IMR-90 (cell line): ENCODE measurements at regions of chr6 and their contacts with region 1.

Region 1: DNA sequence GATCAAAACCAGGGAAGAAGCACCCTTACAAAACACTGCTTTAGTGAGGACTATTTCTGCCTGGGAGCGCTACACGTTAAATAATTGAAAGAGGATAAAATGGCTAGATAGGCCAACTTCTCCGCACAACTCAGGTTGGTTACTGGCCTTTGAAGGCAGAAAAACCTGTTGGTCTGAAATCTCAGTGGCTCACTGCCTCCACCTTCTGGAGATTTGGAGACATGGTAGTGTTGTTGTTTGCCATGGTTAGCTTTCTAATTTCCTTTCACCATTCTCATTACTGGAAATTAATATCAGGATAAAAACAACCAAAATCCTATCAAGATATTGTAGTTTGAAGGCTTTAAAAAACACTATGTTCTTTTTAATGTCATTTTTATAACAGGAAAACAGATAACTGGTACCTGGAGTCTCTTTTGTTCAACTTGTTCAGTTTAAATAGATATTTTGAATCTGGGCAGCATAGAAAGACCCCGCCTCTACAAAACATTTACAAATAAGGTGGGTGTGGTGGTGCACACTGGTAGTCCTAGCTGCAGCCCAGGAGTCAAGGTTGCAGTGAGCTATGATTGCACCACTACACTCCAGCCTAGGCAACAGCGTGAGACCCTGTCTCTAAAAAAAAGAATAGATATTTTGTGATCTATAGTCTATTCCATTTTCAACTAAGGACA is 27.5 kb upstream of the BCLAF1 start:
- DNase-seq: peak; percentile 69
- ATAC-seq: peak; percentile 96
- H3K4me3 ChIP-seq: no peak overlapping the region
- H3K27ac ChIP-seq: no peak overlapping the region
- H3K4me1 ChIP-seq: no peaks in the 10 kb centered on the region
- H3K27me3 ChIP-seq: peaks cover 7% of the 10 kb centered on the region
- CTCF ChIP-seq: peak; percentile 81
- POLR2A ChIP-seq: no peak
- RAD21 ChIP-seq: peak; percentile 82

Region 2: DNA sequence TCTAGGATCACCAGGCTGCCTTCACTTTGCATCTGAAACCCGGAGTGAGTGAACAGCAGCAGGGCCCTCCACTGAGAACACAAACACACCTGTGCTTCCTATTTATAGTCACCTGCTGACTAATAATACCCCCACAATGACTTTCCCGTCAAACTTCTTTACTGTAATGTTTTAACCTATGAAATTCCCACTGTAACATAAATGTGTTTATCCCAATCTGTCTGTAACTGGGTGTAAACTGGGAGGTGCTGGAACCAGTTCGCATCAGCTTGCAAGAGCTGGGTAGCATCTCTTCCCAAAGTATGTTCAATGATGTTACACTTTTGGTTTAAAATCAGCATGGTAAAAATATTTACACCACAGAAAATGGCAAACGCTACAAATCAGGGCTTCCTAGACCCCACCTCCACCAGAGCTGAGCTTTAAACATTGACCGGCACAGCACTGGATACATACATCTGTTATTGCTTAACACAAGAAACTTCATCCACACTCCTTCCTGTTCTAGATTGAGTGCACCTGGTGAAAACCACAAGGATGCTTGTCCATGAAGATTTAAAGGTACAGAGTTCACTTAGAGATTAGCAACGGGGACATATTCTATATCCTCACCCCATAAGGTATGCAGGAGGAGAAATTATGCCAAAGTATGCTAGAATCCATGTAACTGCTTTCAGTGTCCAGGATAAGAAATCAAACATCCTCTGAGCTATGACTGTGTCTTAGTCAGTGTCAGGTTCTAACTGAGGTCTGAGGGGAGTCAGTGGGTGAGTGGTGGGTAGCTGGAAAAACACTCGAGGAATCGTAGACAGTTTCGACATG is 1446.3 kb before region 1 on chr6:
- CTCF ChIA-PET with region 1: no interaction called
- POLR2A ChIA-PET with region 1: no interaction called
- dilution Hi-C with region 1: no loop called
- in situ Hi-C with region 1: no loop called
- intact Hi-C with region 1: no loop called
- DNase-seq: peak; percentile 77
- ATAC-seq: peak; percentile 54; the same call in 1 of the 2 replicates
- H3K4me3 ChIP-seq: no peak overlapping the region
- H3K27ac ChIP-seq: peak overlapping the region; percentile 43; the same call in 1 of the 2 replicates
- H3K4me1 ChIP-seq: no peaks in the 10 kb centered on the region
- H3K27me3 ChIP-seq: no peaks in the 10 kb centered on the region; the same call in 1 of the 2 replicates
- CTCF ChIP-seq: no peak
- POLR2A ChIP-seq: no peak
- RAD21 ChIP-seq: no peak

Region 3: DNA sequence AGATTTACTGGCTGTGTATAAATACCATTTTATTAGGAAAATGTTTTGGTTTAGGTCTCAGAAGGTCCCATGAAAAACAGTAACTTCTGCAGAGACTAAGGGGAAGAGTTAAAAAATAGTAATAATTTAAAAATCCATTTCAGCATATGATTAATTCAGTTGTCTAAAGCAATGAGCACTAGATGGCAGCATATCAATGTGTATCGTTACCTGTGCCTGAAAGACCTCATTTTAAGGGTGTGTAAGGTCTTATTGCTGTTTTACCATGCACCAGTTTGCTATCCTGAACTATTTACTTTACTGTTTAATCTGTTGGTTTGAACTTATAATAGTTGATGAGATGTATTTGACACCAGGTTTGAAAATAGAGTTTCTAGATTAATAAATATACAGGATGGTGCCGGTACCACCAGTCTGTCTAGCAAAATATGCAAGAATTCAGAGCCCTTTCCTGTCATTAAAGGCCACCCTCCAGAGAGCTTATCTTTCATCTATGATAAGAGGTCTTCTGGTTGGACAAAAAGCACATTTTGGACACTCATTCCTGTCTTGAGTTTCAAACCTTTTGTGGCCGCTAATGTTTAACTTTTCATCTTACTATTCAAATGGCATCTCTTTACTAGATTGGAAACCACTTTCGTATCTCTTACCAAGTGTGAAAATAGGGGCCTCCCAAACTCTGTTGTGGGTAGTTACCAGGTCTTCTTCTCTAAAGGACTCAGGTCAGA is 810.7 kb before region 1 on chr6:
- CTCF ChIA-PET with region 1: no interaction called
- POLR2A ChIA-PET with region 1: no interaction called
- dilution Hi-C with region 1: no loop called
- in situ Hi-C with region 1: no loop called
- intact Hi-C with region 1: loop called (anchors 1 kb)
- DNase-seq: peak; percentile 74
- ATAC-seq: peak; percentile 86
- H3K4me3 ChIP-seq: no peak overlapping the region
- H3K27ac ChIP-seq: no peak overlapping the region
- H3K4me1 ChIP-seq: peaks cover 2% of the 10 kb centered on the region; the same call in 1 of the 2 replicates
- H3K27me3 ChIP-seq: no peaks in the 10 kb centered on the region
- CTCF ChIP-seq: peak; percentile 68
- POLR2A ChIP-seq: no peak
- RAD21 ChIP-seq: peak; percentile 85

Region 4: GRCh38 chr6:135811644-135812526 is 505.3 kb before region 1 on chr6:
- CTCF ChIA-PET with region 1: no interaction called
- POLR2A ChIA-PET with region 1: no interaction called
- dilution Hi-C with region 1: no loop called
- in situ Hi-C with region 1: no loop called
- intact Hi-C with region 1: no loop called
- DNase-seq: peak; percentile 24
- ATAC-seq: no peak
- H3K4me3 ChIP-seq: no peak overlapping the region
- H3K27ac ChIP-seq: no peak overlapping the region
- H3K4me1 ChIP-seq: no peaks in the 10 kb centered on the region
- H3K27me3 ChIP-seq: no peaks in the 10 kb centered on the region
- CTCF ChIP-seq: no peak
- POLR2A ChIP-seq: no peak
- RAD21 ChIP-seq: no peak